GM12878 (cell line): ENCODE measurements at regions of chr1 and their contacts with region 1.

Region 1: DNA sequence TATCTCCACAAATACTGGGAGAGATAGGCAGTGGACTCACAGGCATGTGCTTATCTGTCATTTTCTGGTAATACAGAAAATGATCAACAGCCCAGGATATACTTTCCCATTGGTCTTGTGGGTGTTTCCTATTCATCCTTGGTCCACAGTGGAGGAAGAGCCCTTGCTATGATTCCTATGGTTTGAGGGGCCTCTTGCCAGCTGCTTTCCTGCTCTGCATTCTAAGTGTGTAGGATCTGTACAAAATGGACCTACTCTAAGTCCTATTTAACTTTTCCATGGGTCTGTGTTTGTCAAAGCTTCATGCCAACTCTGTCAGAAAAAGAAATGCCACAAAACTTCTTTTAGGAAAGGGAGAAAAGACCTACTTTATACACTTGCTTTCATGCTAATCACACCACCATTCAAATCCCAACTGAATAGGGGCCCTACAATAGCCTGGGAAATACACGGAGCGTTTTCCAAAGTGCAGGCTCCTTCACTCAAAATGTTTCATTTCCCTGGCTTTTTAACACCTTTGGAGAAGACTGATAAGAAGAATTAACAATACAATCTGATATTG is 16.4 kb downstream of the PLPP3 start:
- DNase-seq: no peak
- ATAC-seq: no peak
- H3K4me3 ChIP-seq: no peak overlapping the region
- H3K27ac ChIP-seq: no peak overlapping the region
- H3K4me1 ChIP-seq: no peaks in the 10 kb centered on the region; the same call in 1 of the 2 replicates
- H3K27me3 ChIP-seq: no peaks in the 10 kb centered on the region
- CTCF ChIP-seq: no peak
- EP300 ChIP-seq: no peak
- POLR2A ChIP-seq: no peak
- RAD21 ChIP-seq: no peak

Region 2: GRCh38 chr1:56547953-56548352 is 15.0 kb before region 1 on chr1:
- CTCF ChIA-PET with region 1: interaction called, 9 read pairs
- POLR2A ChIA-PET with region 1: interaction called, 13 read pairs
- RAD21 ChIA-PET with region 1: interaction called, 11 read pairs
- SMC1A ChIA-PET with region 1: interaction called, 342 read pairs
- in situ Hi-C with region 1: no loop called
- intact Hi-C with region 1: no loop called
- DNase-seq: no peak
- ATAC-seq: no peak
- H3K4me3 ChIP-seq: no peak overlapping the region
- H3K27ac ChIP-seq: no peak overlapping the region
- H3K4me1 ChIP-seq: 0 out of 2 replicates have a peak, but pooled peaks cover 4% of the 10 kb centered on the region
- H3K27me3 ChIP-seq: no peaks in the 10 kb centered on the region; a peak in 1 of 4 replicates
- CTCF ChIP-seq: no peak
- EP300 ChIP-seq: no peak
- POLR2A ChIP-seq: no peak
- RAD21 ChIP-seq: no peak

Region 3: GRCh38 chr1:56774067-56774609 is 211.2 kb after region 1 on chr1:
- CTCF ChIA-PET with region 1: no interaction called
- POLR2A ChIA-PET with region 1: no interaction called
- RAD21 ChIA-PET with region 1: no interaction called
- SMC1A ChIA-PET with region 1: no interaction called
- in situ Hi-C with region 1: no loop called
- intact Hi-C with region 1: no loop called
- DNase-seq: no peak
- ATAC-seq: peak; percentile 90
- H3K4me3 ChIP-seq: no peak overlapping the region
- H3K27ac ChIP-seq: no peak overlapping the region
- H3K4me1 ChIP-seq: no peaks in the 10 kb centered on the region
- H3K27me3 ChIP-seq: no peaks in the 10 kb centered on the region
- CTCF ChIP-seq: no peak
- EP300 ChIP-seq: no peak
- POLR2A ChIP-seq: no peak
- RAD21 ChIP-seq: no peak

Region 4: GRCh38 chr1:57384901-57385300 is 821.9 kb after region 1 on chr1:
- CTCF ChIA-PET with region 1: no interaction called
- POLR2A ChIA-PET with region 1: no interaction called
- RAD21 ChIA-PET with region 1: no interaction called
- SMC1A ChIA-PET with region 1: no interaction called
- in situ Hi-C with region 1: no loop called
- intact Hi-C with region 1: no loop called
- DNase-seq: no peak
- ATAC-seq: no peak
- H3K4me3 ChIP-seq: no peak overlapping the region
- H3K27ac ChIP-seq: no peak overlapping the region
- H3K4me1 ChIP-seq: no peaks in the 10 kb centered on the region
- H3K27me3 ChIP-seq: no peaks in the 10 kb centered on the region
- CTCF ChIP-seq: no peak
- EP300 ChIP-seq: no peak
- POLR2A ChIP-seq: no peak
- RAD21 ChIP-seq: no peak